Breast epithelium (tissue), 4 donors: ENCODE measurements at regions of chr9 and their contacts with region 1.

Region 1: GRCh38 chr9:7347556-7347955 is 452.0 kb downstream of the DMAC1 start:
- DNase-seq: no peak
- H3K4me3 ChIP-seq: no peak overlapping the region
- H3K27ac ChIP-seq: no peak overlapping the region
- H3K4me1 ChIP-seq: no peaks in the 10 kb centered on the region
- H3K27me3 ChIP-seq: no peaks in the 10 kb centered on the region
- CTCF ChIP-seq: no peak
- POLR2A ChIP-seq: no peak

Region 2: GRCh38 chr9:7316166-7316795 is 31.3 kb before region 1 on chr9:
- intact Hi-C with region 1: loop called (anchors 1 kb)
- DNase-seq: no peak
- H3K4me3 ChIP-seq: no peak overlapping the region
- H3K27ac ChIP-seq: no peak overlapping the region
- H3K4me1 ChIP-seq: no peaks in the 10 kb centered on the region
- H3K27me3 ChIP-seq: peaks cover 0 to 6% of the 10 kb centered on the region in 2 donors
- CTCF ChIP-seq: no peak
- POLR2A ChIP-seq: no peak